K562 (cell line): ENCODE measurements at regions of chr17 and their contacts with region 1.

Region 1: GRCh38 chr17:78865682-78866390 is 25.2 kb upstream of the USP36 start:
- DNase-seq: peak; percentile 65 to 79 (median 68)
- ATAC-seq: peak; percentile 80
- H3K4me3 ChIP-seq: no peak overlapping the region
- H3K27ac ChIP-seq: no peak overlapping the region
- H3K4me1 ChIP-seq: peaks cover 3 to 15% of the 10 kb centered on the region in 2 experiments; a peak in 3 of 5 replicates
- H3K27me3 ChIP-seq: peaks cover 22 to 39% of the 10 kb centered on the region in 2 experiments
- CTCF ChIP-seq: peak; percentile 89 to 94 (median 92)
- EP300 ChIP-seq: no peak
- POLR2A ChIP-seq: no peak
- RAD21 ChIP-seq: peak; percentile 59 to 80

Region 2: DNA sequence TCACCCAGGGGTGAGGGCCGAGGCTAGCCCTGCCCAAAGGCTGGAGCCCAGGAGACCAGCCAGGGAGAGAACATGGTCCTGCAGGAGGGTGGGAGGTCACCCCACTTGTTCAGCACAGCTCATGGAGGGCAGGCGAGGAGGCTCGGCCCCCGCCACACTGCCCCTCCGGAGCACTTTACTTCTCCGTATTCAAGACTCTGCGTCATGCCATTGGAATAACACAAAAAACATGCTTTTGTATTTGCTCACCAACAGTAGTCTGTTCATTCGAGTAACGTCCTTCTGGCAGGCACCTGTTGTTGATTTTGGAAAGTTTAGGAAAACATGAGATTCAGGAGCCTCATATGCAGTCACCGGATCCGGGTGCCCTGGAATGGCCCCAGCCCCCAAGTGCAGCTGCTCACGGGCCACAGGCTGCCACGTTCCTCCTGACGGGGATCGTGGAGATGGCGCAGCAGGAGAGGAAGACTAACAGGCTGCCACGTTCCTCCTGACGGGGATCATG is 207.5 kb before region 1 on chr17:
- CTCF ChIA-PET with region 1: no interaction called
- POLR2A ChIA-PET with region 1: no interaction called
- in situ Hi-C with region 1: no loop called
- intact Hi-C with region 1: no loop called
- DNase-seq: no peak
- ATAC-seq: no peak
- H3K4me3 ChIP-seq: no peak overlapping the region
- H3K27ac ChIP-seq: no peak overlapping the region
- H3K4me1 ChIP-seq: no peaks in the 10 kb centered on the region; a peak in 1 of 5 replicates
- H3K27me3 ChIP-seq: peaks cover 35 to 55% of the 10 kb centered on the region in 2 experiments
- CTCF ChIP-seq: no peak
- EP300 ChIP-seq: no peak
- POLR2A ChIP-seq: no peak
- RAD21 ChIP-seq: no peak

Region 3: GRCh38 chr17:78970834-78971773 is 105.3 kb after region 1 on chr17:
- CTCF ChIA-PET with region 1: interaction called, 16 read pairs
- POLR2A ChIA-PET with region 1: no interaction called
- in situ Hi-C with region 1: no loop called
- intact Hi-C with region 1: loop called (anchors 1 kb)
- DNase-seq: peak; percentile 77 to 86 (median 85)
- ATAC-seq: peak; percentile 83
- H3K4me3 ChIP-seq: no peak overlapping the region
- H3K27ac ChIP-seq: no peak overlapping the region
- H3K4me1 ChIP-seq: peaks cover 0 to 52% of the 10 kb centered on the region in 2 experiments; a peak in 2 of 5 replicates
- H3K27me3 ChIP-seq: peaks cover 25 to 49% of the 10 kb centered on the region in 2 experiments
- CTCF ChIP-seq: peak; percentile 92 to 97 (median 92)
- EP300 ChIP-seq: no peak
- POLR2A ChIP-seq: no peak
- RAD21 ChIP-seq: peak; percentile 66 to 83